WTC11 (cell line): ENCODE measurements at regions of chr6 and their contacts with region 1.

Region 1: GRCh38 chr6:56708810-56709597 is 66.3 kb upstream of the DST start:
- DNase-seq: no peak
- ATAC-seq: no peak
- H3K4me3 Mint-ChIP-seq: no peak overlapping the region
- H3K27ac Mint-ChIP-seq: no peak overlapping the region
- H3K4me1 Mint-ChIP-seq: peaks cover 32% of the 10 kb centered on the region
- H3K27me3 Mint-ChIP-seq: no peaks in the 10 kb centered on the region
- CTCF ChIP-seq: peak; percentile 41

Region 2: GRCh38 chr6:56757588-56757984 is 48.6 kb after region 1 on chr6:
- CTCF ChIA-PET with region 1: interaction called, 13 read pairs
- POLR2A ChIA-PET with region 1: no interaction called
- DNase-seq: no peak
- ATAC-seq: peak; percentile 74
- H3K4me3 Mint-ChIP-seq: no peak overlapping the region
- H3K27ac Mint-ChIP-seq: peak overlapping the region; percentile 15; the same call in 1 of the 2 replicates
- H3K4me1 Mint-ChIP-seq: peaks cover 75% of the 10 kb centered on the region
- H3K27me3 Mint-ChIP-seq: no peaks in the 10 kb centered on the region
- CTCF ChIP-seq: no peak

Region 3: GRCh38 chr6:56843573-56844349 is 134.8 kb after region 1 on chr6:
- CTCF ChIA-PET with region 1: interaction called, 66 read pairs
- POLR2A ChIA-PET with region 1: no interaction called
- DNase-seq: peak; percentile 81
- ATAC-seq: peak; percentile 85
- H3K4me3 Mint-ChIP-seq: peak overlapping the region; percentile 80
- H3K27ac Mint-ChIP-seq: no peak overlapping the region
- H3K4me1 Mint-ChIP-seq: peaks cover 63% of the 10 kb centered on the region
- H3K27me3 Mint-ChIP-seq: no peaks in the 10 kb centered on the region
- CTCF ChIP-seq: no peak; the same call in 1 of the 2 replicates